ENCODE measurements at regions of chr12 and their contacts with region 1.

Region 1: DNA sequence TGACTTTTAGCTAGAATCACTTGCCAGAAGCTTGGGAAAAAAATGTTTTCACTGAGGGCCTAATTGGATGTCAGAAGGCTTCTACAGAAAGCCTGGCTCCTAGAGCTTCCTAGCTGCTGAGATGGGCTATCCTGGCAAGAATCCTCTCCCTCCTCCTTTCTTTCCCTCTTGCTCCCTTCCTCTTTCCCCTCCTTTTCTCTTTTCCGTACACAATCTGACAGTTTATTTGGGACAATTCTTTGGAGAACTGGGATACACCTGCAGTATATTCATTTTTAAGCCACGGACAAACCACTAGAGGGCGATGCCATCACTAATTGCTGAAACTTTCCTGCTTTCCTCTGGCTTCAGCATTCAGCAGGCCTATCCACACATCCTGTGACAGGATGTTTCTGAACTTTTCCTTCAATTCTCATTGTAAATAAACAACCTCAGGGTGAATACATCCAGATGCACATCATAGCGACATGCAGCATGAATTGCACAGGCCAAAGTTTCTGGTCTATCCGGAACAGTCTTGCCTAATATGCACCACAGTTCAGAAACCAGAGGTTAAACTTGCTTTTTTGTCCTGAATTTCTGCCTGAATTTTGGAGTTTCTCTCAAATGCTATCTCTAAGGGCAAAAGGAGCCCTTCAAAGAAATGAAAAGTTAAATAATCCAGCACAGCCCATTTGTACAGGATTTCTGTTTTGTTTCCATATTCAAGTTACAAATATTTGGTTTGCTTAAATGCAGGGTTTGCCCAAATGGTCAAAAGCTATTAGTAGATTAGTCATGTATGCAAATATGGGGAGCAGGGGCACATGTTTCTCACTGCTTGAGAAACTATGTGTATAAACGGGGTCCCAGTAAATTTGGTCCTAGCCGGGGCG is 142.8 kb downstream of the PAWR start:
- DNase-seq: no peak

Region 2: GRCh38 chr12:79420146-79420618 is 127.8 kb before region 1 on chr12:
- intact Hi-C with region 1: loop called (anchors 5 kb)
- DNase-seq: no peak

Region 3: DNA sequence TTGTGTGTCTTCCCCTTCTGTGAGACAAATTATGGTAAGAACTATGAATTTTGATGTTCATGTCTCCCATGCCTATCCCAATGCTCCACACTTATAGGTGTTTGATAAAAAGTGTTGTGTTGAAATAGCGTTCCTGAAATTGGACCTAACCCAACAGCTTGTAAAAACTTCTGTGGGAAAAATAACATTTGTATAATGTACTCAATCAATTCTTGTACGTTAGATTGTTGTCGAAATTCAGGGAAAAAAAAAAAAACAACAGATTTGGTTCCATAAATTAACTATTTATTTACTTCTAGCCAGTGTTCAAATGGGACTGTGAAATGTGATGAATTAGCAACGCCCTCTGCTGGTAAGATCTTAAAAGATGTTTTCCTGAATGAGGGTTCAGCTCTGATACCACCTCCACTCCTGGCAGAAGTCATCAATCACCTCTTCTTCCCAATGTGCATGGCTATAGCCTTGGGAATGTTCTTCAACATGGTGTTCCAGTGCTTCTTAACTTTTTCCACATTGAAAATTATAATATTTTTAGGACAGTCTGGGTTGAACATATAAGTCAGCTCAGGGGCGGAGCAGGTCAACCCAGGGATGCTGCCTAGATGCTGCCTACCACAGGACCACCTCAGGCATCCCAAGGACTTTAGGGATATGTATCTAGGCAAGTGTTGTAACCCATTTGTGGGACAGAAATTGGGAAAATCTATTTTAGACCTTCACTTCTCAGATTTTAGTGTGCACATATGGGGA is 722.0 kb after region 1 on chr12:
- intact Hi-C with region 1: loop called (anchors 5 kb)
- DNase-seq: no peak

Measured in cardiac septum (tissue), 1 donor.